ENCODE measurements at regions of chr4 and their contacts with region 1.

Region 1: GRCh38 chr4:140004549-140004895 is 149.5 kb downstream of the MAML3 start:
- DNase-seq: peak; percentile 49 to 73
- H3K4me3 ChIP-seq: peak overlapping the region; percentile 24 to 44 (median 36)
- H3K27ac ChIP-seq: peak overlapping the region in 3 of 5 donors; percentile 28 to 63 (median 34)
- H3K4me1 ChIP-seq: peaks cover 0 to 22% (median 13%) of the 10 kb centered on the region in 4 donors
- H3K27me3 ChIP-seq: no peaks in the 10 kb centered on the region
- CTCF ChIP-seq: no peak
- EP300 ChIP-seq: no peak
- POLR2A ChIP-seq: no peak

Region 2: DNA sequence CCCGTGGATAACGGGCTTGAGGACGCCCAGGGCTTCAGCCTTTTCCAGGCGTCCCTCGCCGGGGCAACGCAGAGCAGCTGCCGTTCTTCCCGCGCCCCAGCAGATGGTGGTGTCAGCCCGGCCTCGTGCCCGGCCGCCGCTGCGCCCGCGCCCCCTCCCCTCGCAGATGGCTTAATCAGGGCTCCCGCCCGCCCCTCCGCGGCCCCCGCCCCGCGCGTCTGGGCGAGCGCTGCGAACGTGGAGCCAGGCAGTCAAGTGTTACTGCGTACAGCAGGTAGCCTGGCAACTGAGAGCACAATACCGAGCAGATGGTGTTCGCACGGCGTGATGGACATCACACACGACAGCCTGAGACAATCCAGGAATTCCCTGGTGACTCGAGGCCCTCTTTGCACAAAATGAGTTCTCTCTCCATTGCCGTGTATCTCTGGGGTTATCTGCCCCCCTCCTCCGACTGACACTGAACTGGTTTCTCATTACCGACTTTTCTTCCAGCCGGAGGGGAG is 269.6 kb before region 1 on chr4:
- intact Hi-C with region 1: loop called (anchors 10 kb)
- DNase-seq: peak; percentile 81 to 97
- H3K4me3 ChIP-seq: peak overlapping the region; percentile 50 to 54 (median 52)
- H3K27ac ChIP-seq: peak overlapping the region; percentile 66 to 93 (median 87)
- H3K4me1 ChIP-seq: peaks cover 19 to 42% (median 28%) of the 10 kb centered on the region in 4 donors
- H3K27me3 ChIP-seq: no peaks in the 10 kb centered on the region
- CTCF ChIP-seq: peak in 5 of 7 experiments; percentile 56 to 81 (median 70)
- EP300 ChIP-seq: no peak
- POLR2A ChIP-seq: no peak

Region 3: DNA sequence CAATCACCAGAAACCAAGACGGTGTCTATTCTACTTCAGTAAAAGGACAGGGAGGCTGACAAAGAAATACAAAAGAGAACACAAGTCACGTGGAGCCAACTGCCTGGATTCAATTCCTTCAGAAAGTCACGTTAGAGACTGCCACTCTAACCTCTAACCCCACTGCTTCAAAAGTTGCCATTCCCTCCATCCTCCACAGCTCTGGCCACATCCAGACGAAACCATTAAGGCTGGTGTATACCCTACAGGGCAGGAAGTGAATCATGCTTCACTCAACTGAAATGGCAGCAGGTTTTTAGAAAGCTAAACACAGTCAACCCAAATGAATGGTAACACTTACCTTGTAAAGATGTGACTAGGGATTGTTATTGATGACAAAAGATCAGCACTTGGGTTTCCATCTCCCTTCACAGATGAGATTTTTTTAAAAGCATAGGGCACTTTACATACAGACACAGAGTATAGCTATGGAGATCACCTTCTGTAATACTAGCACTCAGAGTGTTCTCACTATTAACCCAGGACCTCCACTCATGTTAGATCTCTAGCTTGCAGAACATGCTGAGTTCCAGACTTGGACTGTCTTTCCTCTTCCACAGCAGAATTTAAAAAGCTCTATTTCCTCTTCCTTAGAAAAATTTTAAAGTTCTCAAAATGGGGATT is 112.1 kb after region 1 on chr4:
- intact Hi-C with region 1: no loop called
- DNase-seq: no peak
- H3K4me3 ChIP-seq: no peak overlapping the region
- H3K27ac ChIP-seq: no peak overlapping the region
- H3K4me1 ChIP-seq: peaks cover 0 to 39% (median 14%) of the 10 kb centered on the region in 4 donors
- H3K27me3 ChIP-seq: no peaks in the 10 kb centered on the region
- CTCF ChIP-seq: no peak
- EP300 ChIP-seq: no peak
- POLR2A ChIP-seq: no peak